ENCODE measurements at regions of chr1 and their contacts with region 1.

Region 1: DNA sequence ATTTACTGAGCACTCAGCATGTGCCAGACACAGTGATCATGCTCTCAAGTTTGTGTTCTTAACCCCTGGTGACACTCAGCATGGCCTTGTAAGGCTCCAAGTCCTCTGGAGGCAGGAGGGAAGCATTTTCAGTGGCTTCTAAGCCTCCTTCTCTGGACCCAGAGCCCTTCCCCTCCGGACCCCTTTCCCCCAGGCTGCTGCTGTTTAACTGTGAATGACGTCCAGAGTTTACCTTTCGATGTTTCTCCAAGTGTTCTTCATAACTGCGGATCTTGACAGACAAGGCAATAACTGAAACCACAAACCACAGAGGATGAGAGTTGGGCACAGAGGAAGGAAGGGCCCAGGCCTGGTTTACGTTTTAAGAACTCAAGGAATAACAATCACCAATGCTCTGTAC is 6.5 kb downstream of the MRPS15 start:
- DNase-seq: no peak
- H3K4me3 ChIP-seq: no peak overlapping the region
- H3K4me3 Mint-ChIP-seq: no peak overlapping the region
- H3K27ac Mint-ChIP-seq: no peak overlapping the region
- H3K4me1 ChIP-seq: no peaks in the 10 kb centered on the region
- H3K4me1 Mint-ChIP-seq: no peaks in the 10 kb centered on the region
- H3K27me3 ChIP-seq: no peaks in the 10 kb centered on the region
- H3K27me3 Mint-ChIP-seq: no peaks in the 10 kb centered on the region
- CTCF ChIP-seq: no peak

Region 2: GRCh38 chr1:36088262-36088574 is 369.5 kb before region 1 on chr1:
- CTCF ChIA-PET with region 1: no interaction called
- POLR2A ChIA-PET with region 1: interaction called, 13 read pairs
- intact Hi-C with region 1: no loop called
- DNase-seq: no peak
- H3K4me3 ChIP-seq: peak overlapping the region; percentile 95
- H3K4me3 Mint-ChIP-seq: peak overlapping the region; percentile 93
- H3K27ac Mint-ChIP-seq: no peak overlapping the region
- H3K4me1 ChIP-seq: no peaks in the 10 kb centered on the region
- H3K4me1 Mint-ChIP-seq: no peaks in the 10 kb centered on the region
- H3K27me3 ChIP-seq: no peaks in the 10 kb centered on the region
- H3K27me3 Mint-ChIP-seq: no peaks in the 10 kb centered on the region
- CTCF ChIP-seq: no peak

Region 3: GRCh38 chr1:36115200-36115669 is 342.5 kb before region 1 on chr1:
- CTCF ChIA-PET with region 1: no interaction called
- POLR2A ChIA-PET with region 1: no interaction called
- intact Hi-C with region 1: no loop called
- DNase-seq: no peak
- H3K4me3 ChIP-seq: no peak overlapping the region
- H3K4me3 Mint-ChIP-seq: no peak overlapping the region
- H3K27ac Mint-ChIP-seq: no peak overlapping the region
- H3K4me1 ChIP-seq: no peaks in the 10 kb centered on the region
- H3K4me1 Mint-ChIP-seq: no peaks in the 10 kb centered on the region
- H3K27me3 ChIP-seq: no peaks in the 10 kb centered on the region
- H3K27me3 Mint-ChIP-seq: no peaks in the 10 kb centered on the region
- CTCF ChIP-seq: no peak

Region 4: GRCh38 chr1:36269408-36269838 is 188.3 kb before region 1 on chr1:
- CTCF ChIA-PET with region 1: no interaction called
- POLR2A ChIA-PET with region 1: no interaction called
- intact Hi-C with region 1: no loop called
- DNase-seq: peak; percentile 52 to 62
- H3K4me3 ChIP-seq: no peak overlapping the region
- H3K4me3 Mint-ChIP-seq: peak overlapping the region; percentile 46
- H3K27ac Mint-ChIP-seq: peak overlapping the region; percentile 31
- H3K4me1 ChIP-seq: peaks cover 16% of the 10 kb centered on the region
- H3K4me1 Mint-ChIP-seq: peaks cover 5% of the 10 kb centered on the region
- H3K27me3 ChIP-seq: no peaks in the 10 kb centered on the region
- H3K27me3 Mint-ChIP-seq: no peaks in the 10 kb centered on the region
- CTCF ChIP-seq: no peak